Body of pancreas (tissue), 4 donors: ENCODE measurements at regions of chr3 and their contacts with region 1.

Region 1: GRCh38 chr3:50542177-50543034 is 25.1 kb downstream of the C3orf18 start:
- DNase-seq: peak; percentile 73 to 84 (median 77)
- ATAC-seq: peak; percentile 83
- H3K4me3 ChIP-seq: no peak overlapping the region
- H3K27ac ChIP-seq: no peak overlapping the region
- H3K4me1 ChIP-seq: no peaks in the 10 kb centered on the region
- H3K27me3 ChIP-seq: no peaks in the 10 kb centered on the region
- CTCF ChIP-seq: peak; percentile 77 to 88 (median 84)
- POLR2A ChIP-seq: no peak

Region 2: GRCh38 chr3:50347194-50347918 is 195.1 kb before region 1 on chr3:
- intact Hi-C with region 1: loop called (anchors 10 kb)
- DNase-seq: peak; percentile 80 to 83 (median 83)
- ATAC-seq: peak; percentile 28
- H3K4me3 ChIP-seq: no peak overlapping the region
- H3K27ac ChIP-seq: peak overlapping the region in 2 of 4 donors; percentile 39 to 52
- H3K4me1 ChIP-seq: peaks cover 53% of the 10 kb centered on the region
- H3K27me3 ChIP-seq: no peaks in the 10 kb centered on the region
- CTCF ChIP-seq: peak in 6 of 7 experiments; percentile 37 to 76 (median 60)
- POLR2A ChIP-seq: peak in 1 of 3 donors; percentile 9

Region 3: GRCh38 chr3:50436114-50436674 is 106.2 kb before region 1 on chr3:
- intact Hi-C with region 1: loop called (anchors 5 kb)
- DNase-seq: peak; percentile 79 to 87 (median 81)
- ATAC-seq: peak; percentile 88
- H3K4me3 ChIP-seq: no peak overlapping the region
- H3K27ac ChIP-seq: no peak overlapping the region
- H3K4me1 ChIP-seq: no peaks in the 10 kb centered on the region
- H3K27me3 ChIP-seq: no peaks in the 10 kb centered on the region
- CTCF ChIP-seq: peak; percentile 78 to 92 (median 87)
- POLR2A ChIP-seq: no peak